H1 (cell line): ENCODE measurements at regions of chr4 and their contacts with region 1.

Region 1: DNA sequence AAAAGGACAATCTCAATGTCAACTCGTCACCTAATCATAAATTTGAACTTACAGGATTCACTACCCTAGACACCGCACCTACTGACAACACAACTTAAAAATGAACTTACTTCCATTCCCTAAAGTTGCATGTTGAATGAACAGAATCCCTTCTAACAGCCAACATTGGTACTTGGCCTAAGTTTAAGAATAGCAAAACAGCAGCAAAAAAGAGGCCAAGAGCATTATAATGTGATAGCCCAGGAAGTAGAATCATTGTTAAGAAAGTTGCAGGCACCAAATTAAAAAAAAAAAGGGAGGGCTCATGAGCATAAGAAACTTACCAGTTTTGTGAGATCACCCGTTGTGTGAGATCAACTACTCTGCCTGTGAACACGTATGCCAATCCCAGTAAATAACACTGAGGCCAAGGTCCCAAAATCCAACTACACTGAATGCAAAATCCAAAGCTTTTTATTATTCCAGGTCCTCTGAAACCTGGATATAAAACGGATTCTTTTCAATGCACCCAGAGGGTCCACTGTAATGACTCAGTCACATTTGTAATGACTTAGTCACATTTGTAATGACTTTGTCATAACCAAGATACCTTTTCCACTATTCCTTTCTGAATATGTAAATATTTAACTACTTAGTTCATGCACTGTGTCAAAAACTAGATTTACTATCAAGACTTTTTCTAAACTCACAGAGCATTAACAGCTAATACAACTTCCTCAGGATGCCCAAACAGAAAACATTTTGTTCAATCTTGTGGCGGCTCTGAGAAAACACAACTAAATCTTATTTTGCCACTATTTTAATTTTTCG is 6.8 kb downstream of the HNRNPDL start:
- DNase-seq: no peak
- H3K4me3 ChIP-seq: no peak overlapping the region
- H3K27ac ChIP-seq: no peak overlapping the region
- H3K4me1 ChIP-seq: peaks cover 0 to 4% (median 2%) of the 10 kb centered on the region in 4 experiments; a peak in 3 of 7 replicates
- H3K27me3 ChIP-seq: no peaks in the 10 kb centered on the region
- CTCF ChIP-seq: no peak
- EP300 ChIP-seq: no peak
- POLR2A ChIP-seq: peak; percentile 86 to 90
- RAD21 ChIP-seq: no peak

Region 2: DNA sequence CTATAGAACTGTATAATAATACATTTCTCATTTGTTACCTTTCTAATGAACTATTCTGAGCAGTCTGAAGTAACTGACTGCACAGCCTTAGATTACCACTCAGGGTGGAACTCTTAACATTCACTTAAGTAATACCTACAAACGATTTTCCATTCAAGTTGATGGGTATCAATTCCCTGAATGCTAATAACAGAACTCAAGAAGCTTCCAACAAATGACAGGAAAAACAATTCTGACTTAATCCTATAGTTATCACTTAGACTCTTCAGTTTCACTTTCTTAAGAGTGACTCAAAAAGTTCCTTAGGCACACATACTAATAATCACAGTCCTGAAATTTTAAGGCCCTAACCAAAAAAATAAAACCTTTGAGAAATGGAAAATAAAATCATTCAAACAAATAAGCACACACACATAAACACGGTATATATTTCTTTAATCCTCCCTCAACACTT is 70.5 kb before region 1 on chr4:
- CTCF ChIA-PET with region 1: no interaction called
- POLR2A ChIA-PET with region 1: interaction called, 11 read pairs
- DNase-seq: no peak
- H3K4me3 ChIP-seq: no peak overlapping the region
- H3K27ac ChIP-seq: no peak overlapping the region
- H3K4me1 ChIP-seq: no peaks in the 10 kb centered on the region
- H3K27me3 ChIP-seq: peaks cover 0 to 1% (median 0%) of the 10 kb centered on the region in 4 experiments; a peak in 1 of 7 replicates
- CTCF ChIP-seq: no peak
- EP300 ChIP-seq: no peak
- POLR2A ChIP-seq: no peak
- RAD21 ChIP-seq: no peak

Region 3: GRCh38 chr4:82360298-82361177 is 62.9 kb before region 1 on chr4:
- CTCF ChIA-PET with region 1: interaction called, 4 read pairs
- POLR2A ChIA-PET with region 1: interaction called, 104 read pairs
- DNase-seq: no peak
- H3K4me3 ChIP-seq: no peak overlapping the region
- H3K27ac ChIP-seq: no peak overlapping the region; the same call in 1 of the 2 replicates
- H3K4me1 ChIP-seq: no peaks in the 10 kb centered on the region; a peak in 1 of 7 replicates
- H3K27me3 ChIP-seq: peaks cover 0 to 1% (median 0%) of the 10 kb centered on the region in 4 experiments; a peak in 1 of 7 replicates
- CTCF ChIP-seq: peak in 1 of 3 experiments; percentile 56; a peak in 2 of 4 replicates
- EP300 ChIP-seq: no peak
- POLR2A ChIP-seq: no peak
- RAD21 ChIP-seq: peak; percentile 45 to 56

Region 4: DNA sequence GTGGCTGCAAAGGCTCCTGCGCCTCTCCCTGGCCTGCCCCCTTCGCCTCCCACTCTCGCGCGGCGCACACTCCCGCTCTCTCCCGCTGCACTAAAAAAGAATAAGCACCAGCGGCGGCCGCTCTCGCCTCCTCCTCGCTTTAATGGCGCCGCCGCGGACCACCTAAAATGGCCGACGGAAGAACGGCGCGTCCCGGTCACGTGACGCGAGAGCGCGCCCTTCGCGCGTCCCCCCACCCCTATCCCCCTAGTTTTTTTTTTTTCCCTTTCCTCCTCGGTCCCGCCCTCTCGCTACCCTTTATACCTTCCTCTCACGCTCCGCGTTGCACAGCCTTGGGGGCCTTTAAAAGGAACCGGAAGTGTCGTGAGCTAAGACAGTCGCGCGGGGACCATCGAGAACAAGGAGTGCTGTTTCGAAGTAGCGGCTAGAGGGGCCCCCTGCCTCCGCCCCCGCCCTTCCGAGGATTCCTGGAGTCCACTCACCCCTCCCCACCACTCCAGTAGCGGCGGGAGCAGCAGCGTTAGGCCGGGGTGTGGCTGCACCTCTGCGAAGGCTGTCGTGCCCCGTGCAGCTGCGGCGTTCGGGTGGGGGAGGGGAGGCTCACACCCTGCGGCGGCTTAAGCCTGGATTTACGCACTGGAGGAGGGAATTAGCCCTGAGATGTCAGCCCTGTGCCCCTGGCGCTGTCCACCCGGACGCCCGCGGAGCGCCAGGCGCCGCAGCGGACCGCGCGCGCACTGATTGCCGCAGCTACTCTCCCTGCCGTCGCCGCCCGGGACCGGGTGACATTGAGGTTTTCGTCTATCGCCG is 49.4 kb before region 1 on chr4 and contains the start of gene HNRNPD:
- CTCF ChIA-PET with region 1: interaction called, 4 read pairs
- POLR2A ChIA-PET with region 1: interaction called, 152 read pairs
- DNase-seq: peak; percentile 94 to 96
- H3K4me3 ChIP-seq: peak within 1 kb of the TSS; percentile 91 to 99 (median 97)
- H3K27ac ChIP-seq: peak within 1 kb of the TSS; percentile 99
- H3K4me1 ChIP-seq: no peaks in the 10 kb centered on the region; a peak in 2 of 7 replicates
- H3K27me3 ChIP-seq: no peaks in the 10 kb centered on the region
- CTCF ChIP-seq: no peak
- EP300 ChIP-seq: peak in 1 of 2 experiments; percentile 70; a peak in 1 of 3 replicates
- POLR2A ChIP-seq: peak; percentile 86; a peak in 2 of 3 replicates
- RAD21 ChIP-seq: peak in 1 of 2 experiments; percentile 22; a peak in 3 of 4 replicates
- total RNA-seq, gene HNRNPD: 642 and 646 TPM in 2 replicates

Region 5: GRCh38 chr4:82379964-82380733 is 43.3 kb before region 1 on chr4:
- CTCF ChIA-PET with region 1: interaction called, 5 read pairs
- POLR2A ChIA-PET with region 1: interaction called, 152 read pairs
- DNase-seq: no peak
- H3K4me3 ChIP-seq: no peak overlapping the region
- H3K27ac ChIP-seq: no peak overlapping the region
- H3K4me1 ChIP-seq: peaks cover 0 to 3% (median 0%) of the 10 kb centered on the region in 4 experiments; a peak in 4 of 7 replicates
- H3K27me3 ChIP-seq: no peaks in the 10 kb centered on the region
- CTCF ChIP-seq: no peak
- EP300 ChIP-seq: no peak
- POLR2A ChIP-seq: no peak
- RAD21 ChIP-seq: no peak

Region 6: DNA sequence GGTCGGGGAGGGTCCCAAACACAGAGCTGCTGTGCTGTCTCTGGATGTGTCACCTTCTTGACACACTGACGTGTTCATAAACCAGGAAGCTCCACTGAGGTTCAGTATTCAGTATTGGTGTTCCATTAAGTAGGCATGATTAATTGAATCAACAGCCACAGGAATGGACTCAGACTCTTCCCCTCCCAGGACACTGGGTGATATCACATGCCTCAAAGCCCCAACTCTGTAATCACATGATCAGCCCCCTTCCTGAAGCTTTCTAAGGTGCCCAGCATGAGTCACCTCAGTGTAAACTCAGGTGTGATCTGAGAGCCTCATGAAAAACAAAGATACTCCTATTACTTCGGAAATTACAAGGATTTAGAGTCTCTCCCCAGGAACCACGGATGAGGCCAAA is 28.5 kb before region 1 on chr4:
- CTCF ChIA-PET with region 1: no interaction called
- POLR2A ChIA-PET with region 1: interaction called, 29 read pairs
- DNase-seq: no peak
- H3K4me3 ChIP-seq: no peak overlapping the region
- H3K27ac ChIP-seq: no peak overlapping the region
- H3K4me1 ChIP-seq: no peaks in the 10 kb centered on the region
- H3K27me3 ChIP-seq: no peaks in the 10 kb centered on the region
- CTCF ChIP-seq: no peak
- EP300 ChIP-seq: no peak
- POLR2A ChIP-seq: no peak
- RAD21 ChIP-seq: no peak

Region 7: GRCh38 chr4:82437285-82438005 is 14.0 kb after region 1 on chr4:
- CTCF ChIA-PET with region 1: interaction called, 9 read pairs
- POLR2A ChIA-PET with region 1: interaction called, 126 read pairs
- DNase-seq: no peak
- H3K4me3 ChIP-seq: no peak overlapping the region
- H3K27ac ChIP-seq: no peak overlapping the region
- H3K4me1 ChIP-seq: peaks cover 0 to 7% (median 0%) of the 10 kb centered on the region in 4 experiments; a peak in 2 of 7 replicates
- H3K27me3 ChIP-seq: no peaks in the 10 kb centered on the region
- CTCF ChIP-seq: no peak
- EP300 ChIP-seq: no peak
- POLR2A ChIP-seq: no peak
- RAD21 ChIP-seq: no peak

Region 8: GRCh38 chr4:82918091-82918490 is 494.6 kb after region 1 on chr4:
- CTCF ChIA-PET with region 1: no interaction called
- POLR2A ChIA-PET with region 1: no interaction called
- DNase-seq: no peak
- H3K4me3 ChIP-seq: no peak overlapping the region
- H3K27ac ChIP-seq: no peak overlapping the region
- H3K4me1 ChIP-seq: no peaks in the 10 kb centered on the region
- H3K27me3 ChIP-seq: peaks cover 0 to 2% (median 0%) of the 10 kb centered on the region in 4 experiments; a peak in 1 of 7 replicates
- CTCF ChIP-seq: no peak
- EP300 ChIP-seq: no peak
- POLR2A ChIP-seq: no peak
- RAD21 ChIP-seq: no peak